PC-9 (cell line): ENCODE measurements at regions of chr11 and their contacts with region 1.

Region 1: GRCh38 chr11:11239959-11240358 is 113.1 kb downstream of the CSNK2A3 start:
- DNase-seq: no peak
- H3K4me3 ChIP-seq: no peak overlapping the region
- H3K27ac ChIP-seq: no peak overlapping the region
- H3K4me1 ChIP-seq: no peaks in the 10 kb centered on the region
- H3K27me3 ChIP-seq: peaks cover 5% of the 10 kb centered on the region; the same call in 1 of the 2 replicates
- CTCF ChIP-seq: no peak

Region 2: DNA sequence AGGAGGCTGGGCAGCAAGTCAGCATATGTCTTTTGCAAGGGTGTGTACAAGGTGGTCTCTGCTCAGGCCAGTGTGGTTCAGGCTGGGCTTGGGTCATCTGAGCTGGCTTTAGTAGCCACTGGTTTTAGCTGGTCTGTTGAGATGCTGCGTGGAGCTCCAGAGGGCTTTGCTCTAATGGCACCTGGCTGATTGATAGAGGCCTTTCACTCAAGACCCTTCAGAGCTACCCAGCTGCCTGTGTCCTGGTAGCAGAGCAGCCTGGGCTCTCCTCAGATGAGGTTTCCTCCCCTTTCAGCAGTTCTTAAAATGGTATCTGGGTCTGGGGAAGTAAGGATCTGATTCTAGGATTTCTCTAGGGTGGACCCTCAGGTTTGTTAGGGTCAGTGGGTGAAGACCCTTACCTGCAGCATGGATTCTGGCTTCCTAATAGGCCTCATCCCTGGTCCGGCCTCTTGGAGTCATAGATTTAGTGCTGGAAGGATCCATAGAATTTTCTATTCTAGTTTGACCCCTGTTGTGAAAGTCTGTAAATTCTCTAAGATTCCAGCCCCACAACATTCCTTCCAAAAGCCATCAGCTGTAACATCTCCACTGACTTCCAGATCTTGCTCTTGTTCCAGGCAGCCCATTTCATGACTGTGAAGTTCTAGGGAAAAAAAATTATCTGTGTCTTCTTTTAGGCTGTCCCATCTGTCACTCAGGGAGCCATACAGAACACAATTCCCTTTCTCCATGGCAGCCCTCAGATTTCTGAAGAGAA is 191.9 kb before region 1 on chr11:
- CTCF ChIA-PET with region 1: no interaction called
- POLR2A ChIA-PET with region 1: no interaction called
- intact Hi-C with region 1: no loop called
- DNase-seq: no peak
- H3K4me3 ChIP-seq: no peak overlapping the region
- H3K27ac ChIP-seq: no peak overlapping the region
- H3K4me1 ChIP-seq: no peaks in the 10 kb centered on the region
- H3K27me3 ChIP-seq: no peaks in the 10 kb centered on the region
- CTCF ChIP-seq: no peak

Region 3: GRCh38 chr11:11510939-11511338 is 271.0 kb after region 1 on chr11:
- CTCF ChIA-PET with region 1: no interaction called
- POLR2A ChIA-PET with region 1: no interaction called
- intact Hi-C with region 1: no loop called
- DNase-seq: no peak
- H3K4me3 ChIP-seq: no peak overlapping the region
- H3K27ac ChIP-seq: no peak overlapping the region
- H3K4me1 ChIP-seq: no peaks in the 10 kb centered on the region
- H3K27me3 ChIP-seq: peaks cover 11% of the 10 kb centered on the region
- CTCF ChIP-seq: no peak

Region 4: GRCh38 chr11:11742486-11742885 is 502.5 kb after region 1 on chr11:
- CTCF ChIA-PET with region 1: interaction called, 11 read pairs
- POLR2A ChIA-PET with region 1: no interaction called
- intact Hi-C with region 1: no loop called
- DNase-seq: no peak
- H3K4me3 ChIP-seq: no peak overlapping the region
- H3K27ac ChIP-seq: no peak overlapping the region
- H3K4me1 ChIP-seq: no peaks in the 10 kb centered on the region
- H3K27me3 ChIP-seq: peaks cover 29% of the 10 kb centered on the region
- CTCF ChIP-seq: no peak